ENCODE measurements at regions of chr16 and their contacts with region 1.

Region 1: DNA sequence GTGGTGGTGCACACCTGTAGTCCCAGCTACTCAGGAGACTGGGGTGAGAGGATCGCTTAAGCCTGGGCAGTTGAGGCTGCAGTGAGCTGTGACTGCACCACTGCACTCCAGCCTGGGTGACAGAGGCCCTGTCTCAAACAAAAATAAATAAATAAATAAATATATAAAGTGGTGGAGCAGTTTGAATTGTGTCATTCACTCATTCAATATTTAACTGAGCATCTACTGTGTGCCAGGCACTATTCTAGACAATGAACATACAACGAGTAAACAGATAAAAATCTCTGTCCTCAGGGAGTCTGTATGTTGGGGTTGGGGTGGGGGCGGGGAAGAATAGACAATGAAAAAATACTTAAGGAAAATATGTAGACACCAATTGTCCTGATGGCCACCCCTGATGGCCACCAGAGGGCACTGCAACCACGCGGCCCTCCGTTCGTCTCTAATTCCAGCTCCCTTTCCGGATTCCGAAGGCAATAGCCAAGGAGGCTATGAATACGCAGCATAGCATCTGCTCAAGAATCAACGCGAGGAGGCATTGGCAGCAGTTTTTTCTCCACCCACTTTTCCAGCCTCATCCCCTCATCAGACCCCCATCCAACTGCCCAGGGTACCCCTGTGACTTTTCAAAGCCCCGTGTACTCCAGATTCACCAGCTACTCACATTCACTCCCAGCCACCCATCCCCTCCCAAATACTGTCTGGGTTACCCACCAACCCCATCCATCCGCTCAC is 21.4 kb downstream of the QPRT start:
- DNase-seq: peak; percentile 83
- ATAC-seq: peak; percentile 93

Region 2: DNA sequence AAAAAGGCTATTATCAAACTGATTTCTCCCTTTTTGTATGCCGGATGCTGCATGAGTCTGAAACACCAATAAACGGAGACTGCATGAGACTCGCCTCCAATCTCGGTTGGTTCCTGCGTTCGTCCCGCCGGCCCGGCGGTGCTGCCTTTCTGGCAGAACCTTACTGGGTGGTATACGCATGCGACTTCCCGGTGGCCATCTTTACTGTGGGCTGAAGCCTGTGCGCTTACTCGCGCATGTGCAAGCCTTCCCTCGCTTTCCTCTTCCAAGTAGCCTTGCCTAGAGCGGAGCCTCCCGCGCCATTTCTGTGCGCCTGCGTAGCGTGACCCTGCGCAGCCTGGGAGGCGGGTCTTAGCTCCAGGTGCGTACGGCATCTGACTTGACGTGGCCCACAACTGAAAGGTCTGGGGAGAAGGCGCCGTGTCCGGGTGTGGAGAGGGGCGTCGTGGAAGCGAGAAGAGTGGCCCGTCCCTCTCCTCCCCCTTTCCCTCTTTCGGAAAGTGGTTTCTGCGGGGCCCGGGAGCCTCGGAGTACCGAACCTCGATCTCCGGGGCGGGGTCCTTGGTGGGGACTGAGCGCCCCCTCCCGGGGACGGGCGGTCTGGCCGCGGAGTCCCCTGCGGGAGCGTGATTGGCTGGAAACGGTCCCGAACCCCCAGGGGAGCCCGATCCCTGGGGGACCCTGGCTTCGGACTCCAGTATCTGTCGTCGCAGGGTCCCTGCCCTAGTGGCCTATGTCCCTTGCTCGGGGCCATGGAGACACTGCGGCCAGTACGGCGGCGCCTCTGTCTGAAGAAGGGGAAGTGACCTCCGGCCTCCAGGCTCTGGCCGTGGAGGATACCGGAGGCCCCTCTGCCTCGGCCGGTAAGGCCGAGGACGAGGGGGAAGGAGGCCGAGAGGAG is 115.6 kb after region 1 on chr16 and contains the start of gene PAGR1:
- intact Hi-C with region 1: no loop called
- DNase-seq: peak; percentile 99
- ATAC-seq: peak; percentile 82
- total RNA-seq, gene PAGR1: 14.7 TPM

Region 3: DNA sequence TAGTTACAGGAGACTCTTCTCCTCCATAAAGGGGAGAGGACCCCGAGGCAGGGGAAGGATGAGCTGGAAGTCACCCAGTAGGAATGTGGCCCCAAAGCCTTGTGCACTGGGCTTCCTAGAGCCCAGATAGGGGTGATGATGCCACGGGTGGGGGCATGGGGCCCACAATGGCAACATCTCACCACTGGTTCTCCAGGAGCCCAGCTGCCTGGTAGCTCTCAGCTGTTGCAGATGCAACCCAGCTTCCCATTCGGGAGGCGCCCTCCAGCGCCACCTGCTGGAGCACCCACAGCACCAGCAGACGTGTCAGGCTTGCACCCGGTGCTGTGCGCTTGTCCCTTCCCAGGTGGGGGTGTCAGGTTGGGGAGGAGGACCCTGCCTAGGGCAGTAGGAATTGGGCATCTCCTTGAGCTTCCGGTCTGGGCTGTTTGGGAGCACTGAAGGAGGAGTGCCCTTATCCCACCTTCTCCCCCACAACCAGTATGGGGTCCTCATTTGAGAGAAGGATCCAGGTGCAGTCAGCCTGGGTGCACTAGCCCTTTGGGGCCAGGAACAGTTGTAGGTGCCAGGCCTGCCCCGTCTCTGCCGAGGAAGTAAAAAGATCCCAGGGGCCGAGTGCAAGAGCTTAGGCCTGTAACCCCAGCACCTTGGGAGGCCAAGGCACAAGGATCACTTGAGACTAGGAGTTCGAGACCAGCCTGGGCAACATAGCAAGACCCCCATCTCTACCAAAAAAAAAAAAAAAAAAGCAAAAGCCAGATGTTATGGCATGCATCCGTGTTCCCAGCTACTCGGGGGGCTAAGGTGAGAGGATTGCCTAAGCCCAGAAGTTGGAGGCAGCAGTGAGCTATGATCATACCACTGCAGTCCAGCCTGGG is 148.2 kb after region 1 on chr16:
- intact Hi-C with region 1: loop called (anchors 10 kb)
- DNase-seq: peak; percentile 83
- ATAC-seq: peak; percentile 88

Measured in Right ventricle myocardium superior (tissue), 1 donor.